Activated B cell treated with CpG ODN at 0.5 μM for 24 hours (primary cell): ENCODE measurements at regions of chr15 and their contacts with region 1.

Region 1: DNA sequence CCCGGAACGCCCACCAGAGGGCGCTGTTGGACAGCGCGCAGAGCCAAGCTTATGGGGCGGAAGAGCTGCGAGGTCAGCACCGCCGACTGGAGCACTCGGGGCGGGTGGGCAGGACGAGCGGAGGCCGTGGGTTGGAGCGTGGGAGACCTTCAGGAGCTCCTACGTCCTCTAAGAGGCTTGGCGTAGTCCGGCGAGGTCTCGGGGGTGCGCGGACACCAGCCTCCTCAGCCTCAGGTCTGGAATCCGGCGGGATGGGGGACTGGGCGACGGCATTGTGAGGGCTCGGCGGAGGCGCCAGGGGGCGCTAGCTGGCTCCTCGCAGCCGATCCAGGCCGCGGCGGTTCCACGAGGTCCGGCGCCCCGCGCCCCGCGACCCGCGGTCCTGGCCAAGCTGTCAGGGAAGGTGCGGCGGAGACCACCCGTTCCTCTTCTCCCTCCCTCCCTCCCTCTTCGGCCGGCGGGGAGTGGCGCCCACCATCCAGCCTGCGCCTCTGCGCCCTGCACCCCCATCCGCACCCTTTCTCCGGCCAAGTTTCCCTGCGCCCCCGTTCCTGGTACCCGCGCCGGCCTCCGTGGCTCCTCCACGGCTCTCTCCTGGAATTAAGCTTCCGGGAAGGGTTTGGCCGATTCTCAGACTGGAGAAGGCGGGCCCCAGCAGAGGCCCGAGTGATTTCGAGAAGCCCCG is 24.3 kb upstream of the POLG start:
- DNase-seq: peak; percentile 82
- ATAC-seq: peak; percentile 95
- H3K4me3 Mint-ChIP-seq: peak overlapping the region; percentile 86
- H3K27ac Mint-ChIP-seq: no peak overlapping the region
- H3K4me1 Mint-ChIP-seq: peaks cover 11% of the 10 kb centered on the region
- H3K27me3 Mint-ChIP-seq: peaks cover 56% of the 10 kb centered on the region
- CTCF ChIP-seq: peak; percentile 73

Region 2: GRCh38 chr15:89334510-89335288 is 24.2 kb before region 1 on chr15 and contains the start of gene POLG:
- CTCF ChIA-PET with region 1: interaction called, 11 read pairs
- POLR2A ChIA-PET with region 1: interaction called, 13 read pairs
- intact Hi-C with region 1: loop called (anchors 1 kb)
- DNase-seq: peak; percentile 97
- ATAC-seq: peak; percentile 92
- H3K4me3 Mint-ChIP-seq: peak within 1 kb of the TSS; percentile 88
- H3K27ac Mint-ChIP-seq: peak within 1 kb of the TSS; percentile 99
- H3K4me1 Mint-ChIP-seq: peaks cover 44% of the 10 kb centered on the region
- H3K27me3 Mint-ChIP-seq: peaks cover 2% of the 10 kb centered on the region
- CTCF ChIP-seq: no peak
- total RNA-seq, gene POLG: 116 and 144 TPM in 2 replicates

Region 3: DNA sequence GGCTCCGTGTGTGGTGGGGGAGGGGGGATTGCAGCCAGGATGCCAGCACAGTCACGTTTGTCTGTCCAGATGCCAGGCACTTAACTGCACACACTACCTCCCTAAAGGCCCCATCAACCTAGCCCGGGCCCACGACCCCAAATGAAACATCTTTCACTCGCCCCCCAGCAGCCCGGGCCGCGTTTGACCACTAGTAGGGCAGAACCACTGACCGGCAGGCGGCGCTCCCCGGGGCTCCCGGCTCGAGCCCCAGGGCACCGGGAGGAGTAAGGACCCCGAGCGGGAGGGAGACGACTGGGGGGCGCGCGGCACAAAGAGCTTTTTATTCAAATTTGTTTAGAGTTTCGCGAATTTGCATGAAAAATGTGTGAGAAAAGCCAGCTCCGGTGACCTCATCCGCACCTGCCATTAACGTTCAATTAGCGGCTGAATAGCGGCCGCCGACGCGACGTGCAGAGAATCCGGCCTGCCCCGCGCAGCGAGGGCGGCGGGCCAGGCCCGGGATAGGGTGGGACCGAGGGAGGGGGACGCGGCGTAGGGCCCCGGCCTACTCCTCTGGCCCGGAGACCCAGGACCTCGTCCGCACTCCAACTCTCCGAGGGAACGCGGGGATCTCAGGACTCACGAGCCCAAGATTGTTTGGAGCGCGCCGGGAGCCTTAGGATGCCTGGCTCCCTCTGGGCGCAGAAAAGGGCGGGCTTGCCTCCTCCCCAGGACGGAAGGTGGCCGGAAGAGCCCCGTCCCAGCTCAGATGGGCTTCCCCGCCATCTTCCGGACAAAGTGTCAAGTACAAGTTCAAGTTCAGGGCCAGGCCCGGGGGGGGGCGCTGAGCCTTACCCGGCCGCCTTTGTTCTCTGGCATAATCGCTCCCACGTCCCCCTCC is 40.6 kb after region 1 on chr15:
- CTCF ChIA-PET with region 1: interaction called, 27 read pairs
- POLR2A ChIA-PET with region 1: no interaction called
- intact Hi-C with region 1: loop called (anchors 1 kb)
- DNase-seq: peak; percentile 35
- ATAC-seq: peak; percentile 76
- H3K4me3 Mint-ChIP-seq: peak overlapping the region; percentile 84
- H3K27ac Mint-ChIP-seq: no peak overlapping the region
- H3K4me1 Mint-ChIP-seq: peaks cover 21% of the 10 kb centered on the region
- H3K27me3 Mint-ChIP-seq: peaks cover 50% of the 10 kb centered on the region
- CTCF ChIP-seq: no peak

Region 4: GRCh38 chr15:89442671-89443307 is 83.9 kb after region 1 on chr15:
- CTCF ChIA-PET with region 1: interaction called, 21 read pairs
- POLR2A ChIA-PET with region 1: no interaction called
- intact Hi-C with region 1: no loop called
- DNase-seq: peak; percentile 29
- ATAC-seq: no peak
- H3K4me3 Mint-ChIP-seq: no peak overlapping the region
- H3K27ac Mint-ChIP-seq: no peak overlapping the region
- H3K4me1 Mint-ChIP-seq: peaks cover 31% of the 10 kb centered on the region
- H3K27me3 Mint-ChIP-seq: peaks cover 9% of the 10 kb centered on the region
- CTCF ChIP-seq: no peak

Region 5: GRCh38 chr15:89514596-89515406 is 155.9 kb after region 1 on chr15:
- CTCF ChIA-PET with region 1: no interaction called
- POLR2A ChIA-PET with region 1: no interaction called
- intact Hi-C with region 1: no loop called
- DNase-seq: no peak
- ATAC-seq: no peak
- H3K4me3 Mint-ChIP-seq: no peak overlapping the region
- H3K27ac Mint-ChIP-seq: no peak overlapping the region
- H3K4me1 Mint-ChIP-seq: no peaks in the 10 kb centered on the region
- H3K27me3 Mint-ChIP-seq: peaks cover 38% of the 10 kb centered on the region
- CTCF ChIP-seq: no peak

Region 6: GRCh38 chr15:89556413-89557262 is 197.7 kb after region 1 on chr15:
- CTCF ChIA-PET with region 1: interaction called, 7 read pairs
- POLR2A ChIA-PET with region 1: no interaction called
- intact Hi-C with region 1: loop called (anchors 1 kb)
- DNase-seq: no peak
- ATAC-seq: peak; percentile 31
- H3K4me3 Mint-ChIP-seq: no peak overlapping the region
- H3K27ac Mint-ChIP-seq: no peak overlapping the region
- H3K4me1 Mint-ChIP-seq: no peaks in the 10 kb centered on the region
- H3K27me3 Mint-ChIP-seq: peaks cover 9% of the 10 kb centered on the region
- CTCF ChIP-seq: peak; percentile 67